ENCODE measurements at regions of chr11 and their contacts with region 1.

Region 1: DNA sequence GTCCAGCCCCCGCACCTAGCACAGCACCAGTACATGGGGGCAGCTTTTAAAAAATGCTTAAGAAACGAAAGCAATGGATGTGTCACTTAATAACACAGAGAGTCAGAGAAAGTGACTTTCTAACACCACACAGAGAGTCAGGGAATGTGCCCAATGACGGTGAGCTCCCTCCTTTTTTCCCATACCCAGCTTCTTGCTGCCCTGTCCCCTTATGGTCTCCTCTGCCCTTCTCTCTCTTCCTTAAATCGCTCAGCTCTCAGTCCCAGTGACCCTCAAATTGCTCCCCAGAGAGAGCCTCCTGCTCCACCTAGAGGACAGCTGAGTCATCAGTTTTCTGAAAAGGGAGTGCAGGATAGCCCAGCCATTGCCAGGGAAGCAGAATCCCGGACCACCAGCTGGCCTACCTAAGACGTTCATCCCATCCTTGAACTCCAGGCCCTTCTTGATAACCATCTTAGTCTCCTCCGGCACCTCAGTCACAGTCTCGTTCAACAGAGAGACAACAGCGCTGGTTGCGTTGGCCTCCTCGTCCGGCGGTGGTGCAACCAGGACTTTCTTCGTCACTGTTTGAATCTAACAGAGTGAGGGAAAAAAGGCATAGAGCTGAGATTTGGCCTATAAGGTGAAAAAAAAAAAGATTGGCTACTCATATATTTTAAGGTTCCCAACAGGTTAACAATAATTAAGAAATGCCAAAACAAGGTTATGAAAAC is 113.5 kb downstream of the SLC1A2 start:
- DNase-seq: peak; percentile 46
- H3K4me3 Mint-ChIP-seq: peak overlapping the region; percentile 58
- H3K27ac Mint-ChIP-seq: peak overlapping the region; percentile 33
- H3K4me1 Mint-ChIP-seq: peaks cover 22% of the 10 kb centered on the region
- H3K27me3 Mint-ChIP-seq: no peaks in the 10 kb centered on the region

Region 2: DNA sequence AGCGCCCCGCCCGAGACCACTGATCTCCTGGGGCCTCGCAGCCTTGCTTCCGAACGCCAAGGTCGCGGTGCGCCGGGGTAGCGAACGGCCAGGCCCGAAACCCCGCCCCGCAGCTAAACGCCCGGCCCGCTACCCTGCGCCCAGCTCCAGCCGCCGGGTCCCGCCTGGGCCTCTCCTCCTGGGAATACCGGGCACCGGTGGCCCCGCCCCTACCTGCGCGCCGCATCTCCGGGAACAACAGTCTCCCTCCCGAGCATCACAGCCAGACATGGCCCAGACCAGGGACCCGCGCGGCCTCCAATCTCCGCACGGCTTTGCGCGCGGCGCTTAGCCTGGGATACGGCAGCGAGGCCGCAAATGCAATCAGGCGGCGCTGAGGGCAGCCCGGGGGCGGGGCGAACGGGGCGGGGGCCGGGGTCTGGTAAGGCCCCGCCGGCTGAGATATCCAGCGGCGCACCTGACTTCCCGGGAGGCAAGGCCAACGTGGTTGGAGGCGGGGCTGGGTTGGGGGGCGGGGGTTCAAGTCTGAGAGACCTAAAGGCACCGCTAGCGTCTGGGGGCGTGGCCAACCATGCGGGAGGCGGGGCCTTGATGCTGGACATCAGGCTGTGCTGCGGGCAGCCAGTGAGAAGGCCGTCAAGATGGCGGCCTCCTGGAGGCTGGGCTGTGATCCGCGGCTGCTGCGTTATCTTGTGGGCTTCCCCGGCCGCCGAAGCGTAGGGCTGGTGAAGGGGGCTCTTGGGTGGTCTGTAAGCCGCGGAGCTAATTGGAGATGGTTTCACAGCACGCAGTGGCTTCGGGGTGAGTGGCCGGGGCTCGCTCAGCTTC is 389.6 kb before region 1 on chr11 and contains the starts of genes APIP and PDHX:
- CTCF ChIA-PET with region 1: interaction called, 4 read pairs
- intact Hi-C with region 1: loop called (anchors 2 kb)
- DNase-seq: peak; percentile 98
- H3K4me3 Mint-ChIP-seq: peak within 1 kb of the TSS; percentile 99
- H3K27ac Mint-ChIP-seq: peak within 1 kb of the TSS; percentile 96
- H3K4me1 Mint-ChIP-seq: peaks cover 44% of the 10 kb centered on the region
- H3K27me3 Mint-ChIP-seq: no peaks in the 10 kb centered on the region
- total RNA-seq, gene APIP: 42.4 to 42.5 TPM
- total RNA-seq, gene PDHX: 38.2 to 40.9 TPM

Region 3: GRCh38 chr11:34926101-34926830 is 379.6 kb before region 1 on chr11:
- CTCF ChIA-PET with region 1: interaction called, 9 read pairs
- intact Hi-C with region 1: loop called (anchors 1 kb)
- DNase-seq: peak; percentile 22
- H3K4me3 Mint-ChIP-seq: no peak overlapping the region
- H3K27ac Mint-ChIP-seq: no peak overlapping the region
- H3K4me1 Mint-ChIP-seq: peaks cover 17% of the 10 kb centered on the region
- H3K27me3 Mint-ChIP-seq: no peaks in the 10 kb centered on the region

Region 4: DNA sequence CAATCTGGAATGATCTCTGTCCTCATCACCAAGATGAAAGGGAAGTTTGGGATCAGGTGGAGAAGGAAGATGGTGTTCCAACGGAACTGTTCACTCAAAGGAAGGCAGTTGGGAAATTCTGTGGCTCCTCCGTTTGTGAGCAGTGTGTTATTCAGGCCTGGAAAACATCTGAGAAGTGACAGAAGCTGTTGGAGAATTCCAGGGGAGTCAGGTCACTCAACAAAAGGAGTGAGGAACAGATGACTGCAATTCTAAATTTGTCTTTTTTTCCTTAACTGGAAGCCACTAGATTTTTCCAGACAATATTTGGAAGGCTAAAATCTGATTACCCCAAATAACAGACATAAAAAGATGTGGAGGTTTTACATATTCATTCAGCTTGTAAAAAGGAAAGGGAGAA is 59.1 kb before region 1 on chr11:
- CTCF ChIA-PET with region 1: interaction called, 7 read pairs
- intact Hi-C with region 1: loop called (anchors 2 kb)
- DNase-seq: no peak
- H3K4me3 Mint-ChIP-seq: no peak overlapping the region
- H3K27ac Mint-ChIP-seq: no peak overlapping the region
- H3K4me1 Mint-ChIP-seq: peaks cover 66% of the 10 kb centered on the region
- H3K27me3 Mint-ChIP-seq: no peaks in the 10 kb centered on the region

Region 5: DNA sequence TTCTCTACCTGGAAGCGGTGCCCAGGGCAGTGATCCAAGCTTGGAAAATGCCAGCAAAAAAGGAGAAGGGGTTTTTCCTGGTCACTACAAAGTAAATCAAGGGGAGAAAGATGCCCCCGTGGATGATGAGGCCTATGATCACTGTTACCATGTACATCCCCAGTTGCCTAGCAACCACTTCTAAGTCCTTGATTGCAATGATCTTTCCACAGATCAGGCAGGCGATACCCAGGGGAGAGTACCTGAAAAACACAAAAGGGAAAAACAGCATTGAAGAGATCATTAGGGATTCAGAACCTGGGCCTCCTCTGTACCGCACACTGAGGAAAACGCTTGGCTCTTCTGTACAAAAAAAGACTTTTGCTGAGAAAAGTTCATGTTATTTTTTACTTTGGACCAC is 13.5 kb before region 1 on chr11:
- CTCF ChIA-PET with region 1: interaction called, 12 read pairs
- intact Hi-C with region 1: no loop called
- DNase-seq: peak; percentile 15
- H3K4me3 Mint-ChIP-seq: no peak overlapping the region
- H3K27ac Mint-ChIP-seq: no peak overlapping the region
- H3K4me1 Mint-ChIP-seq: peaks cover 26% of the 10 kb centered on the region
- H3K27me3 Mint-ChIP-seq: no peaks in the 10 kb centered on the region

Region 6: DNA sequence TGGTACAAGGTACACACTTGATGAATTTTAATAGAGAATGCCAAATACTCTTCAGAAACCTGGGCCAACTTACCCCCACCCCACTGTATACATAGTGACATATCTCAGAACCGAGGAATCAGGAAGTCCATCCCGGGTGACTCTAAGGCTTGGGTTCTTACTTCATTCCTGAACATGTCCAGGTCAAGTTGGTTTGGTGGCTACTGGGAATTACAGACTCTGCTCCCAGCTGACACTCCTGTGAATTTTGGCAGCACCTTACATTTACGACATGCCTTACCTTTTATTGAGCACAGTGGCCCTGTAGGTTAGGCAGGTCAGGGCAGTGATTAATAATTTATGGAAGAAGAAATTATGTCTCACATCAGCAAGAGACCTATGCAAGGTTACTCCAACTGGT is 567.9 kb after region 1 on chr11:
- CTCF ChIA-PET with region 1: no interaction called
- intact Hi-C with region 1: no loop called
- DNase-seq: no peak
- H3K4me3 Mint-ChIP-seq: no peak overlapping the region
- H3K27ac Mint-ChIP-seq: no peak overlapping the region
- H3K4me1 Mint-ChIP-seq: no peaks in the 10 kb centered on the region
- H3K27me3 Mint-ChIP-seq: peaks cover 2% of the 10 kb centered on the region